ENCODE measurements at regions of chr17 and their contacts with region 1.

Region 1: DNA sequence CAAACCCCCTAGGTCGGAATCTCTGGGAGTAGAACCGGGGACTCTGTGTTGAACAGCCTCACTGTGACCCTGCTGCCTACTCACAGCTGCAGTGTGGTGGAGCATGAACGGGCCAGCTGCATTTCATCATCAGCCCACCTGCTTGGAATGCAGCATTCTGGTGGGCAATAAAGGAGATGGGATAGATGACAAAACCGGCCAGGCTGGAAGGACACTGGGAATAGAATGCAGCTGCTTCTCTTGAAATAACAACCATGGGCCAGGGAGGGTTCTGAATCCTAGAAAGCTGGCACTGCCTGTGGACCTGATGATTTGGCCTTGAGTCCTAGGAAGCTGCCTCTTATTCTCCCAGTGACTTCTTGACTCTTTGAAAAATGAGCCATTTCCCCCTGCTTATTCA is 23.5 kb downstream of the CFAP97D1 start:
- DNase-seq: no peak
- H3K4me3 ChIP-seq: no peak overlapping the region
- H3K27ac ChIP-seq: no peak overlapping the region
- H3K4me1 ChIP-seq: no peaks in the 10 kb centered on the region
- H3K27me3 ChIP-seq: no peaks in the 10 kb centered on the region
- CTCF ChIP-seq: no peak

Region 2: DNA sequence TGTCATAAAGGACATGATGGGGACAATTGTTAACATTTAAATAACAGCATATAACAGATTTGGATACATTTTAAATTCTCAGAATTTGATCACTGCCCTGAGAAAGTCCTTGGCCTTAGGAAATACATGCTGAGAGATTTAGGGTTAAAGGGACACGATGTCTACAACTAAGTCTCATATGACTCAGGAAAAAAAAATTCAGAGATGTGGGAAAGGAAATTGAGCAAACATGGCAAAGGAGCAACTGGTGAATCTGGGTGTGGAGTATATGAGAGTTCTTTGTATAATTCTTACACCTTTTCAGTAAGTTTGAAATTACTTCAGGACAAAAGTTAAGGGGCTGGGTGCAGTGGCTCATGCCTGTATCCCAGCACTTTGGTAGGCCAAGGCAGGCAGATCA is 11.0 kb after region 1 on chr17:
- CTCF ChIA-PET with region 1: no interaction called
- POLR2A ChIA-PET with region 1: interaction called, 10 read pairs
- intact Hi-C with region 1: no loop called
- DNase-seq: peak; percentile 7 to 84
- H3K4me3 ChIP-seq: no peak overlapping the region
- H3K27ac ChIP-seq: peak overlapping the region; percentile 81
- H3K4me1 ChIP-seq: peaks cover 27% of the 10 kb centered on the region
- H3K27me3 ChIP-seq: no peaks in the 10 kb centered on the region
- CTCF ChIP-seq: no peak